Heart left ventricle (tissue), 16 donors: ENCODE measurements at regions of chr4 and their contacts with region 1.

Region 1: GRCh38 chr4:24551492-24552289 is 32.7 kb downstream of the DHX15 start:
- DNase-seq: no peak
- ATAC-seq: no peak
- H3K4me3 ChIP-seq: no peak overlapping the region
- H3K27ac ChIP-seq: peak overlapping the region in 1 of 12 donors; percentile 13
- H3K4me1 ChIP-seq: peaks cover 0 to 51% (median 20%) of the 10 kb centered on the region in 12 donors
- H3K27me3 ChIP-seq: no peaks in the 10 kb centered on the region
- CTCF ChIP-seq: peak in 11 of 12 donors; percentile 7 to 55 (median 35)
- POLR2A ChIP-seq: no peak

Region 2: DNA sequence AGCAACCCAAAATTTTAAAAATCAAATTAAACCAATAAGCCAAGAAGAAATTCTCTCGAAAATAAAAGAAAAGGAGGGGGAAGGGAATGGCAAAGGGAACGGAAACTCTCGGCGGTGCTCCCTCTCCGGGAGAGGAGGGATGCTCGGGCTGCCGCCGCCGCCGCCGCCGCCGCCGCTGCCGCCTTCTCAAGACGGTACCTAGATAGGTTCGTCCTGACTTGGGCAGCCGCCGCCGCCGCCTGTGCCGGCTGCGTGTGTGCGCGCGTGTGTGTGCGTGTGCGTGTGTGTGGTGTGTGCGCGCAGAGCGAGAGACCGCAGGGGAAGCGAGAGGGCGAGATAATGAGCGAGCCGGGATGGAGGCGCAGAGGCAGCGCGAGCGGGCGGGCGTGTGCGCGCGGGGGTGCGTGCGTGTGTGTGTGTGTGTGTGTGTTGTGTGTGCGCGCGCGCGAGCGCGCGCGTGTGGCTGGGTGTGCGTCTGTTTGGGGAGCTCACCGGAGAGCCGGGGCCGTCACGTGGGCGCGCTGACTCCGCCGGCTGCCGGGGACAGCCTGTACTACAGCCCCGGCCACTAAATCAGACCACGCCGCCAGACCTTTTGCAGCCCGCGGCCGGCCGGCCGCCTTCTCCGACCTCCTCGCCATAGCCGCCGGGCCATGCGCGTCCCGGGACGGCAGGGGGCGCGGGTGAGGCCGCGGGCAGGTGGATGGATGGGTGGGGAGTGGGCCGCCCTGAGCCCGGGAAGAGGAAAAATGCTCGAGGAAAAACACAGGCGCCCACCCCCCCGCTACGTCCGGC is 79.0 kb before region 1 on chr4:
- intact Hi-C with region 1: loop called in 1 of 10 experiments (anchors 10 kb)
- DNase-seq: peak; percentile 83 to 92 (median 90)
- ATAC-seq: peak; percentile 87 to 93 (median 90)
- H3K4me3 ChIP-seq: peak overlapping the region; percentile 19 to 92 (median 64)
- H3K27ac ChIP-seq: peak overlapping the region in 11 of 12 donors; percentile 17 to 78 (median 68)
- H3K4me1 ChIP-seq: peaks cover 0 to 41% (median 18%) of the 10 kb centered on the region in 12 donors
- H3K27me3 ChIP-seq: peaks cover 0 to 50% (median 4%) of the 10 kb centered on the region in 9 donors
- CTCF ChIP-seq: peak; percentile 51 to 83 (median 70)
- POLR2A ChIP-seq: peak in 1 of 2 donors; percentile 3

Region 3: GRCh38 chr4:24999392-25000089 is 447.9 kb after region 1 on chr4:
- intact Hi-C with region 1: no loop called
- DNase-seq: no peak
- ATAC-seq: peak in 3 of 4 donors; percentile 21 to 43 (median 39)
- H3K4me3 ChIP-seq: no peak overlapping the region
- H3K27ac ChIP-seq: peak overlapping the region in 3 of 12 donors; percentile 0 to 56 (median 25)
- H3K4me1 ChIP-seq: peaks cover 0 to 42% (median 18%) of the 10 kb centered on the region in 12 donors
- H3K27me3 ChIP-seq: no peaks in the 10 kb centered on the region
- CTCF ChIP-seq: no peak
- POLR2A ChIP-seq: no peak